ENCODE measurements at regions of chr16 and their contacts with region 1.

Region 1: GRCh38 chr16:47141773-47142485 is 1.8 kb downstream of the NETO2 start:
- DNase-seq: peak; percentile 69
- ATAC-seq: peak; percentile 53
- H3K4me3 Mint-ChIP-seq: peak overlapping the region; percentile 86
- H3K27ac Mint-ChIP-seq: peak overlapping the region; percentile 59
- H3K4me1 Mint-ChIP-seq: peaks cover 23% of the 10 kb centered on the region
- H3K27me3 Mint-ChIP-seq: no peaks in the 10 kb centered on the region
- CTCF ChIP-seq: no peak

Region 2: DNA sequence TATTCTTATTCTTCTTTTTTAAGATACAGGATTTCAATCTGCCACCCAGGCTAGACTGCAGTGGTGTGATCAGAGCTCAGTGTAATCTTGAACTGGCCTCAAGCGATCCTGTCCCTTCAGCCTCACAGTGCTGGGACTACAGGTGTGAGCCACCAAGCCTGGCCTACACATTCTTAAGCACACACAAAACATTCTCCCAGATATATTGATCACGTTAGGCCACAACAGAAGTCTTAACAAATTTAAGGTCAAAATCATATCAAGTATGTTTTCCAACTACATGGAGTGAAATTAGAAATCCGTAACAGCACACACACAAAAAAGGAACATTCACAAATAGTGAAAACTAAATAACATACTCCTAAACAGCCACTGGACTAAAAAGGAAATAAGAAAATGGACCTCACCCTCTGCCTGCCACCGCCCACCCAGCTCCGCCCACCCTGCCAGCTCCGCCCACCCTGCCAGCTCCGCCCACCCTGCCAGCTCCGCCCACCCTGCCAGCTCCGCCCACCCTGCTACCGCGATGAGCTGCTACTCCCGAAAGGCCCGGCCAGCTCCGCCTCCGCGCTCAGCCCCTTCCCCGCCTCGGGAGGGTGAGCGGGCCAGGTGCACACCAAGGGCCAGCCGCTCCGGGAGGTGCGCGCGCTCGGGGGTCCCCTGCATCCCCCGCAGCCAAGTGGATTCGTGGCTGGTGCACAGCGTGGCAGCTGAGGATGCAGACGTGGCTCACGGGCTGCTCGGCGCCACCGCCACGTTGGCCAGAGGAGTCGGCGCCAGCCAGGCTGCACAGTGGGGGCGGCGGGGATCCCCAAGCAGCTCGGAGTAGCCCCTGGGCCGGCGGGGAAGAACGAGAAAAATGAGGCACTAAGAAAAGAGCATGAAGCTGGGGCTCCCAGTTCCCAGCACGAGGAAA is 352.2 kb before region 1 on chr16:
- CTCF ChIA-PET with region 1: no interaction called
- POLR2A ChIA-PET with region 1: no interaction called
- intact Hi-C with region 1: loop called (anchors 5 kb)
- DNase-seq: peak; percentile 77
- ATAC-seq: peak; percentile 93
- H3K4me3 Mint-ChIP-seq: peak overlapping the region; percentile 84
- H3K27ac Mint-ChIP-seq: peak overlapping the region; percentile 86
- H3K4me1 Mint-ChIP-seq: peaks cover 57% of the 10 kb centered on the region
- H3K27me3 Mint-ChIP-seq: no peaks in the 10 kb centered on the region
- CTCF ChIP-seq: no peak

Region 3: GRCh38 chr16:47018223-47018891 is 123.6 kb before region 1 on chr16:
- CTCF ChIA-PET with region 1: interaction called, 7 read pairs
- POLR2A ChIA-PET with region 1: no interaction called
- intact Hi-C with region 1: loop called (anchors 1 kb)
- DNase-seq: peak; percentile 39
- ATAC-seq: peak; percentile 98
- H3K4me3 Mint-ChIP-seq: peak overlapping the region; percentile 13
- H3K27ac Mint-ChIP-seq: peak overlapping the region; percentile 73
- H3K4me1 Mint-ChIP-seq: peaks cover 28% of the 10 kb centered on the region
- H3K27me3 Mint-ChIP-seq: no peaks in the 10 kb centered on the region
- CTCF ChIP-seq: no peak

Region 4: DNA sequence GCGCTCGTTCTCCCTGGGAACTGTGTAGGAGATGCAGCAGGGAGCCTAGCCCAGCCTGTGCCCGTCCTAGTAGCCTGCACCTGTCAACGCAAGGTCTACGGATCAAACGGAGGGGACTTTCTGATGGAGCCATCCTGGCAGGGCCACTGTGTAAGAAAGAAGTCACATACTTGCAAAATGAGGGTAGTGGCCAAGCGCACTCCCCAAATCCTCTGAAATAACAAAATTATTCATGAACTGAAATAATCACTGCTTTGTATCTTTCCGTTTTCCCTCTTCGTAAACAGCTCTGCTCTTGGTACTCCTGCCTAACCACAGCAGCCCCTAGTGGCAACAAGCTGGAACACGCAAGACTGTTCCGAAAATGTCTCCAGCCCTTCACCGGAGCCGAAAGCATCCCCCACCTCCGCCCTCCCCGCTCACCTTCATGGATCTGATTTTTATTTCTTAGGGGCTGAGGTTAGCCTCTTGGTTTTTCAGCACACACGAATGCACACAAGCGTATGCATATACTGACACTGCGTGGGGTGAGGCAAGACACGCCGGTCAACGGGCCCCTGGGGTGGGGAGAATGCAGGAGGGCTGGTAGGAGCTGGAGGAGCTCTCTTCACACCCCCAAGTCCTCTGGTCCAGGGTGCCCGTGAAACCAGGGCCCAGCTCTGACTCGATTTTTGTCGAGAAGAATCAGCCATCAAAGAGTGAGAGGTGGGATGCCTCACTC is 913.1 kb after region 1 on chr16:
- CTCF ChIA-PET with region 1: interaction called, 10 read pairs
- POLR2A ChIA-PET with region 1: interaction called, 3 read pairs
- intact Hi-C with region 1: loop called (anchors 1 kb)
- DNase-seq: no peak
- ATAC-seq: no peak
- H3K4me3 Mint-ChIP-seq: no peak overlapping the region
- H3K27ac Mint-ChIP-seq: no peak overlapping the region
- H3K4me1 Mint-ChIP-seq: peaks cover 4% of the 10 kb centered on the region
- H3K27me3 Mint-ChIP-seq: peaks cover 19% of the 10 kb centered on the region
- CTCF ChIP-seq: no peak

Region 5: DNA sequence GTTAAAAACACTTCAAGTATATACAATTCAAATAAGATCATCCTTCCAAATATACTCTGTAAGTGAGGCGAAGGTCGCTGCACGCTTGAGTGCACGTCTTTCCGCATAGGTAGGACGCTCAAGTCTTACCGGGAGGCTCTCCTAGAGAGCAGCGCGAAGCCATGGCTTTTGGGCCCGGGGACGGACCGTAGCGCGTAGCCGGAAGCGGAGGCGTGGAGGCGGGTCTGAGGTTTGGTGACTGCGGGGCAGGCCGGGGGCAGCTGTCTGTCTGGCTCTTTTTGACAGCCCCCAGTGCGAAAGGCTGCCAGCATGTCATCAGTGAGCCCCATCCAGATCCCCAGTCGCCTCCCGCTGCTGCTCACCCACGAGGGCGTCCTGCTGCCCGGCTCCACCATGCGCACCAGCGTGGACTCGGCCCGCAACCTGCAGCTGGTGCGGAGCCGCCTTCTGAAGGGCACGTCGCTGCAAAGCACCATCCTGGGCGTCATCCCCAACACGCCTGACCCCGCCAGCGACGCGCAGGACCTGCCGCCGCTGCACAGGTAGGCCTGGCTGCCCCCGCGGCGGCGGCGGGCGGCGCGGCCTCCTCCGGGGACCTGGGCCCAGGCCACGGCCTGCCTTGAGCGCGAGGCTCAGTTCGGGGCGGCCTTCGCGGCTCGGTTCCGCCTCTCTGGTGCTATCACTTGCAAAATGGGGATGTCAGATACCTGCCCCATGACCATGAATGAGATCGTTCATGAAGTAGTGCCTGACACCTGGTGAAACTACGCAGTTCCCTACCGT is 1102.3 kb after region 1 on chr16 and contains the start of gene LONP2:
- CTCF ChIA-PET with region 1: interaction called, 3 read pairs
- POLR2A ChIA-PET with region 1: no interaction called
- intact Hi-C with region 1: loop called (anchors 1 kb)
- DNase-seq: peak; percentile 86
- ATAC-seq: peak; percentile 97
- H3K4me3 Mint-ChIP-seq: peak within 1 kb of the TSS; percentile 91
- H3K27ac Mint-ChIP-seq: peak within 1 kb of the TSS; percentile 90
- H3K4me1 Mint-ChIP-seq: peaks cover 34% of the 10 kb centered on the region
- H3K27me3 Mint-ChIP-seq: no peaks in the 10 kb centered on the region
- CTCF ChIP-seq: no peak
- total RNA-seq, gene LONP2: 63.5 and 72.7 TPM in 2 replicates

Region 6: GRCh38 chr16:48632137-48632774 is 1490.3 kb after region 1 on chr16:
- CTCF ChIA-PET with region 1: interaction called, 4 read pairs
- POLR2A ChIA-PET with region 1: no interaction called
- intact Hi-C with region 1: loop called (anchors 1 kb)
- DNase-seq: no peak
- ATAC-seq: no peak
- H3K4me3 Mint-ChIP-seq: no peak overlapping the region
- H3K27ac Mint-ChIP-seq: no peak overlapping the region
- H3K4me1 Mint-ChIP-seq: peaks cover 8% of the 10 kb centered on the region
- H3K27me3 Mint-ChIP-seq: peaks cover 12% of the 10 kb centered on the region
- CTCF ChIP-seq: no peak

Measured in activated B cell treated with CpG ODN at 0.5 μM for 24 hours (primary cell).